K562 (cell line): ENCODE measurements at regions of chr7 and their contacts with region 1.

Region 1: DNA sequence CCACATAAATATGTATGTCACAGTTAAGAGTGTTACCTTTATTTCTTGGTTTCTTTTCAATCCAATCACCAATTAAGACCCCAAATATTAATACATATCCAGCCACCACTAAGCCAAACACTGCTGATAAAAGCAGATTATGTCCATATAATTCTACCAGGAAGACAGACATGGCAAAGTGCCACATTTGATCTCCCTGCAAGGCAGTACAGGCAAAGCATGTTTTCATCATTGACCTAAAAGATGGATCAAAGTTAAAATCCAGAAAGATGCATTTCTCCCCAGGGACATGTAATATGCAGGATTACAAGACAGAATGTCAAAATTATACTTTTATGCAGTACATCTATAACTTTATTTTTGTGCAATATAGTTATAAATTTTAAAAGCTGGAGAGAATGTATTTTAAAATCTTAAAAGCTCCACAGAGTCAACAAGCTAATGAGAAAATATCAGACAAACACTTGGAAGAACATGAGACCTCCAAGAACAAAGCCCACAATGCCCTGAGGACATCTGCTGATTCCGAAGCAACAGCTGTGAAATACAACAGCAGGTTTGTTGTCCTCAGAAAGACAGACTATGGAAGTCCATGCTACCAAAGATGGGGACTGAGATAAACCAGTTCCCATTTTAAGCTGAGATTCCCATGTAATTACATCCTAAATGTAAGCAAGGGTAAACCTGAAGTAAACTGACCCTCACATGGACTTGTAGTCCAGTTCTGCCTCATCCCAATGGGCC is 54.5 kb upstream of the TOMM7 start:
- DNase-seq: no peak
- ATAC-seq: no peak
- H3K4me3 ChIP-seq: no peak overlapping the region
- H3K27ac ChIP-seq: no peak overlapping the region
- H3K4me1 ChIP-seq: no peaks in the 10 kb centered on the region
- H3K27me3 ChIP-seq: 0 out of 5 replicates have a peak, but pooled peaks cover 0 to 4% of the 10 kb centered on the region in 2 experiments
- CTCF ChIP-seq: no peak
- EP300 ChIP-seq: no peak
- POLR2A ChIP-seq: no peak
- RAD21 ChIP-seq: no peak

Region 2: GRCh38 chr7:22867003-22867402 is 10.2 kb before region 1 on chr7:
- CTCF ChIA-PET with region 1: no interaction called
- POLR2A ChIA-PET with region 1: interaction called, 12 read pairs
- in situ Hi-C with region 1: no loop called
- intact Hi-C with region 1: no loop called
- DNase-seq: no peak
- ATAC-seq: no peak
- H3K4me3 ChIP-seq: no peak overlapping the region
- H3K27ac ChIP-seq: no peak overlapping the region
- H3K4me1 ChIP-seq: no peaks in the 10 kb centered on the region; a peak in 3 of 5 replicates
- H3K27me3 ChIP-seq: no peaks in the 10 kb centered on the region
- CTCF ChIP-seq: no peak
- EP300 ChIP-seq: no peak
- POLR2A ChIP-seq: no peak
- RAD21 ChIP-seq: no peak

Region 3: DNA sequence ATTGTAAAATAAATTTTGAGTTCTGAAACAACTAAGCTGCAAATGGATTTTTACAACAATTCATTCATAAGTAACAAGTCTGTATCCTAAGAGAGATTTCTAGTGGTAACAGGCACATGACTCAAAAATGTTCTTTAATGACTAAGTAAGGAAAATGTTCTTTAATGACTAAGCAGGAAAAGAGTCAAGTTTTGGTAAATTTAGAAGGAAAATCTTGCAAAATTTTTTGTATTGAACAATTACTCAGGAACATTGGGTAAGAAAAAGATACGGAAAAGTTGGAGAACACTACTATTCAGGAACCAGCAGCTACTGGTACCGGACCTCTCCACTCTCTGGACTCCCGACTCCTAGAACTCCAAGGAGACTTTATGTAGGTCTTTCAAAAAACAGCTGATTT is 103.3 kb after region 1 on chr7:
- CTCF ChIA-PET with region 1: no interaction called
- POLR2A ChIA-PET with region 1: no interaction called
- in situ Hi-C with region 1: no loop called
- intact Hi-C with region 1: no loop called
- DNase-seq: no peak
- ATAC-seq: no peak
- H3K4me3 ChIP-seq: no peak overlapping the region
- H3K27ac ChIP-seq: no peak overlapping the region
- H3K4me1 ChIP-seq: peaks cover 0 to 2% of the 10 kb centered on the region in 2 experiments; a peak in 1 of 5 replicates
- H3K27me3 ChIP-seq: no peaks in the 10 kb centered on the region
- CTCF ChIP-seq: no peak
- EP300 ChIP-seq: no peak
- POLR2A ChIP-seq: no peak
- RAD21 ChIP-seq: no peak